Activated CD4-positive, alpha-beta T cell treated with anti-CD3 and anti-CD28 coated beads, Interleukin-2, amount 10 ng/mL, durations not matched to agents 24 days and 14 days (primary cell): ENCODE measurements at regions of chr6 and their contacts with region 1.

Region 1: GRCh38 chr6:149834513-149835481 is 29.4 kb downstream of the LRP11 start:
- DNase-seq: peak; percentile 94
- H3K4me3 Mint-ChIP-seq: no peak overlapping the region
- H3K27ac Mint-ChIP-seq: no peak overlapping the region
- H3K4me1 Mint-ChIP-seq: peaks cover 2% of the 10 kb centered on the region
- H3K27me3 Mint-ChIP-seq: peaks cover 9% of the 10 kb centered on the region

Region 2: GRCh38 chr6:149660028-149660427 is 174.8 kb before region 1 on chr6:
- intact Hi-C with region 1: no loop called
- DNase-seq: peak; percentile 45
- H3K4me3 Mint-ChIP-seq: no peak overlapping the region
- H3K27ac Mint-ChIP-seq: peak overlapping the region; percentile 40
- H3K4me1 Mint-ChIP-seq: peaks cover 8% of the 10 kb centered on the region
- H3K27me3 Mint-ChIP-seq: no peaks in the 10 kb centered on the region

Region 3: DNA sequence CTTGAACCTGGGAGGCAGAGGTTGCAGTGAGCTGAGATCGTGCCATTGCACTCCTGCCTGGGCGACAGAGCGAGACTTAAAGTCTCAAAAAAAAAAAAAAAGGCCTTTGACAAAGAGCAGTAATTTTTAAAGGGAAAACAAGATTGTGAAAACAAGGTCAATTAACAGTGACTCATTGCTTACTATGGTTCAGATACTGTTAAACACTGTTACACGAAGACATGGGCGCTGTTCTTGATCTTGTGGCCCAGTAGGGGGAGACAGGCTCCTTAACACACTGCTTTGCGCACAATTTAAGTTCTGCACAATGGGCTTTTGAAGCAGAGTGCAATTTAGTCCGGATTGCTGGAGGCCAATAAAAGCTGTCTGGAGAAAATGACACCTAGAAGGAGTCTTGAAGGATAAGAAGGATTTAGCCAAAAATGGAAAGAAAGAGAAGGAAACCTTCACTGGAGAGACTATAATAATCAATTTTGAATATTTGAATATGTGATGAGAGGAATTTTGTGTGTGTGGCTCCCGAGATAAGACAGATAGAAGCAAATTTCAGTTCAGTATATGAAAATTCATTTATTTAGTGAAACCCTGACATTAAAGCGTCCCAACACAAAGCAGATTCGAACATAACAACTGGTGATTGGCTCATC is 110.9 kb before region 1 on chr6:
- intact Hi-C with region 1: loop called (anchors 10 kb)
- DNase-seq: peak; percentile 85
- H3K4me3 Mint-ChIP-seq: no peak overlapping the region
- H3K27ac Mint-ChIP-seq: no peak overlapping the region
- H3K4me1 Mint-ChIP-seq: peaks cover 21% of the 10 kb centered on the region
- H3K27me3 Mint-ChIP-seq: no peaks in the 10 kb centered on the region

Region 4: DNA sequence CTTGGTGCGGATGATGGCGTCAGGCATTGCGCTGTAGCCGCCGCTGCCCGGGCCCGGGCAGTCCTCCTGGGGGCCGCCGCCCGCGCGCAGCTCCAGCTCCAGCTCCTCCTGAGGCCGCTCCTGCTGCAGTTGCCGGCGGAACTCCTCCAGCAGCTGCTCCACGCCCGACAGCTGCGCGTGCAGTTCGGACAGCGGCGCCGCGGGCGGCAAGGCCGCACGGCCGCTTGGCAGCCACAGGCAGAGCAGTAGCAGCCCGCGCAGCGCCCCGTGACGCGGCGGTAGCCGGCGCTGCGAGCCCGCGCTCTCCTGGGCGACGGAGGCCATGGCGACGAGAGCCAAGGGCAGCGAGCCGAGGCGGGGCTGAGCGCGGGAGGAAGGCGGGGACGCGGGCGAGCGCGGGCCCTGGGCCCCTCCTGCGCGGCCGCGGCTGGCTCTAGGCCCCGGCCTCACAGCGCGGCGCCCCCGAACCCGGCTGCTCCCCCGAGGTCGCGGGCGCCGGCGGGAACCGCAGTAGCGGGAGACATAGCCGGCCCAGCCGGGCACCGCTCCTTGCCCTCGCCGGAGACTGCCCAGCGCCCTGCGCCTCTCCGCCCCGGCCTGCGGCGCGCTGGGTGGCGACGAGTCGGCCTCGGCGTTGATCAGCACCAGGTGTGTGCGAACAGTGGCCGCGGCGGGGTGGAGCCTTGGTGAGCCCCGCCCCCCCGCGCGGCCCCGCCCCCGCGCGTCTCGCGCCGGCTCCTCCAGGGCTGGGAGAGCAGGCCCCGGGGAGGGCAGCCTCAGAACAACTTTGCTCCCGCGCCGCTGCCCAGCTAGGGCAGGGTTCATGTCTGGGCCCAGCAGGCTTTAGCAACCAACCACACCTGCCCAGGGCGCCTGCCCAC is 29.1 kb after region 1 on chr6 and contains the start of gene LRP11:
- intact Hi-C with region 1: loop called (anchors 1 kb)
- DNase-seq: peak; percentile 95
- H3K4me3 Mint-ChIP-seq: peak within 1 kb of the TSS; percentile 83
- H3K27ac Mint-ChIP-seq: no peak within 1 kb of the TSS
- H3K4me1 Mint-ChIP-seq: peaks cover 20% of the 10 kb centered on the region
- H3K27me3 Mint-ChIP-seq: peaks cover 33% of the 10 kb centered on the region
- total RNA-seq, gene LRP11: 3.7 TPM in 2 replicates

Region 5: GRCh38 chr6:149925974-149926777 is 91.4 kb after region 1 on chr6:
- intact Hi-C with region 1: loop called (anchors 1 kb)
- DNase-seq: peak; percentile 94
- H3K4me3 Mint-ChIP-seq: peak overlapping the region; percentile 76
- H3K27ac Mint-ChIP-seq: no peak overlapping the region
- H3K4me1 Mint-ChIP-seq: peaks cover 20% of the 10 kb centered on the region
- H3K27me3 Mint-ChIP-seq: peaks cover 87% of the 10 kb centered on the region

Region 6: GRCh38 chr6:150016324-150017185 is 181.8 kb after region 1 on chr6:
- intact Hi-C with region 1: loop called (anchors 1 kb)
- DNase-seq: peak; percentile 89
- H3K4me3 Mint-ChIP-seq: no peak overlapping the region
- H3K27ac Mint-ChIP-seq: no peak overlapping the region
- H3K4me1 Mint-ChIP-seq: peaks cover 16% of the 10 kb centered on the region
- H3K27me3 Mint-ChIP-seq: peaks cover 75% of the 10 kb centered on the region